ENCODE measurements at regions of chr22 and their contacts with region 1.

Region 1: DNA sequence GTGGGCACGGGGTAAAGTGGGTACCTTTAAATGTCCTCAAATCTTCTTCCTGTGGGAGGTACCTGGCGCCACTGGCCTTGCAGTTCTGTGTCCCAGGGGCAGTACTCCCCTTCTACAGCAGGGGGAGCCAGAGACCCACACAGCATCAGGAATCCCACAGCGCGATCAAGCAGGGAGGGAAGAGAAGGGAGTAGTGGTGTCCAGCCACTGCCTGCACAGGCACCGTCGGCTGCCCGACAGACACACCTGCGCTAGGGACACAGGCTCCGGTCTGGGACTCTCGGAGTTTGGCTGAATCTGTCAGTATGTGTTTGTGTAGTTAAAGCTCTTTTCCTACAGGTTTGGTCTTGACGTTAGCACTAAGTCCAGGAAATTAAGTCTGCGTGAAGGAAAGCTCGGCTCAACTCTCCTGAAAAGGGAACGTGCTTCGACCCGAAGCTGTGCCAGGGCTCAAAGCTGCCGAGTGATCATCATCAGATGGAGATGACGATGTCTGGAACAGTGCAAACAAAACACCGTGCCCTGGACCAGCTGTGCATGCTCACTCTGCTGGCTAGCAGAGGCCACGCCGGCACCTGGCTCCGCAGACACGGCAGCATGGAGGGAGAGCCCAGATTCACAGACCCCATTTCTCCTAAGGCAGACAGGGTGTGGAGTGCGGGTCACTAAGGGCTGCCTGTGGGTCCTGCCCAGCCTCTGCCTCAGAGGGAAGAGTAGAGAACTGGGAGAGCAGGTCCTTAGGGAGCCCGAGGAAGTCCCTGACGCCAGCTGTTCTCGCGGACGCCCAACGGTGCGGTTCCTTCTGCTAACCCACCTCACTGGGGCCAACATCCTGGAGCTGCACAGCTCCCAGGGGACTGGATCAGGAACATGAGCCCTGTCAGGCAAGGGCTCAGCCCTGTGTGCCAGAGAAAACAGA is 56.0 kb upstream of the BID start:
- DNase-seq: peak; percentile 37
- H3K4me3 ChIP-seq: no peak overlapping the region
- H3K27ac ChIP-seq: no peak overlapping the region
- H3K27me3 ChIP-seq: no peaks in the 10 kb centered on the region
- CTCF ChIP-seq: peak; percentile 100

Region 2: DNA sequence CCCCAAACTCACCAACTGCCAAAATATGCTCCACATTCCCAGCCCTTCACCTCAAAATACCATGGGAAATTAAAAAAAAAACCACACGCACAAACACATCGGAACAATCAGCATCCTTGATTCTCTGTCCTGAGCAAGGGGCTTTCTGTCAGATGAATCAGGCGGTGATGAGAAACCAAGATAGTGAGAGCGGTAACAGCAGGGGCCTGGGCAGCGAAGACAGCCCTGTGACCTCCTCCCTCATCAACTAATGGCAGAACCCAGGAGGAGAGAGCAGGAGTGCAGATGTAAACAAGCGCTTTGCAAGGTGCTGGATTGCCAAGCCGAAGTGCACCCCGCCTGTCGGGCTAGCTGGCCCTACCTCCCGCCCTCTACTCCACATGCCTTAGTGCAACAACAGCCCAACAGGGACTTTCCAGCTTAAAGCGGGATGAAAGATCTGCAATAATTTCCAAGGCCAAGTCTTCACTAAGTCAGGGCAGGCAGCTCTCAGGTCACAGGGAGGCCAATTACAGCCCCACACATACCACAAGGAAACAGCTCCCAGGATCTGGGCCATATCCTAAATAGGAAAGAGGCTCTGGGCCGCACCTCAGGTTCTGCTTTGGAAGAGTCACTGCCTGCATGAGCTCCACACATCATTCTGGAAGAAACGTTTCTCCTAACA is 16.2 kb after region 1 on chr22:
- CTCF ChIA-PET with region 1: interaction called, 16 read pairs
- POLR2A ChIA-PET with region 1: no interaction called
- DNase-seq: no peak
- H3K4me3 ChIP-seq: no peak overlapping the region
- H3K27ac ChIP-seq: no peak overlapping the region
- H3K27me3 ChIP-seq: no peaks in the 10 kb centered on the region
- CTCF ChIP-seq: no peak

Region 3: DNA sequence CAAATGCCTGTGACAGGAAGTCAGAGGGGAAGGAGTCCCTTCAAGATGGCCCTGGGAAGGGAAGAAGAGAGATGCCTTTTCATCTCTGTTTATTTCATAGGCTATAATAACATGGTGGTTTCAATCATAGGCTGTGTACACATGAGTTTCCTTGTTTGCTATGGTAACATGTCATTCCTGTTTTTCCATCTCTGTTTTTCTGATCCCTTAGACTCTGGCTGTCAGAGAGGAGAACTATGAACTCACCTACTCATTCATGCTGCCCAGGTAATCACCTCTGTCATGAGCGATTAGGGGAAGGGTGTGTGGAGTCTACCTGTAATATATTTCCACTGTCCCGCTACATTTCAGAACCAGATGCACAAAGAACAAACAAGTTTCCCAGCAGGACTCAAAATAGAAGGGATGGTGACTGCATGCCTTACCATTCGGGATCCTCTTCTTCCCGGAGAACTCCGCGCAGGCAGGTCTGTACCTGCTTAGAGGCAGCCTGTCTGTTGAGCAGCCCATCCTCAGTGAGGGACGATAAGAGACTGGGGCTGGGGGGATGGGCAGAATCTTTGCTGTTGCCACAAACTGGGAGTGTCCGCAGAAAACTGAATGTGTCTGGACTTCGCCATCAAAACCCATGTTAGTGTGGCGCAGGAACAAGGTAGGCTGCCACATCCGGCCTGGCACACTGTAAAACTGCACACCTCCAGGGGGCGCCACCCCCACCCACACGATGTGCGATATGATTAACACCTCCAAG is 240.4 kb after region 1 on chr22:
- CTCF ChIA-PET with region 1: interaction called, 226 read pairs
- POLR2A ChIA-PET with region 1: interaction called, 5 read pairs
- DNase-seq: no peak
- H3K4me3 ChIP-seq: no peak overlapping the region
- H3K27ac ChIP-seq: no peak overlapping the region
- H3K27me3 ChIP-seq: no peaks in the 10 kb centered on the region
- CTCF ChIP-seq: peak; percentile 30